CD8-positive, alpha-beta T cell (primary cell): ENCODE measurements at regions of chr10 and their contacts with region 1.

Region 1: GRCh38 chr10:16856567-16856966 is 39.3 kb upstream of the RSU1 start:
- DNase-seq: no peak
- ATAC-seq: no peak
- H3K4me3 ChIP-seq: no peak overlapping the region
- H3K4me3 Mint-ChIP-seq: no peak overlapping the region
- H3K27ac ChIP-seq: no peak overlapping the region
- H3K27ac Mint-ChIP-seq: no peak overlapping the region
- H3K4me1 ChIP-seq: no peaks in the 10 kb centered on the region
- H3K4me1 Mint-ChIP-seq: no peaks in the 10 kb centered on the region
- H3K27me3 ChIP-seq: no peaks in the 10 kb centered on the region
- H3K27me3 Mint-ChIP-seq: no peaks in the 10 kb centered on the region
- CTCF ChIP-seq: no peak

Region 2: DNA sequence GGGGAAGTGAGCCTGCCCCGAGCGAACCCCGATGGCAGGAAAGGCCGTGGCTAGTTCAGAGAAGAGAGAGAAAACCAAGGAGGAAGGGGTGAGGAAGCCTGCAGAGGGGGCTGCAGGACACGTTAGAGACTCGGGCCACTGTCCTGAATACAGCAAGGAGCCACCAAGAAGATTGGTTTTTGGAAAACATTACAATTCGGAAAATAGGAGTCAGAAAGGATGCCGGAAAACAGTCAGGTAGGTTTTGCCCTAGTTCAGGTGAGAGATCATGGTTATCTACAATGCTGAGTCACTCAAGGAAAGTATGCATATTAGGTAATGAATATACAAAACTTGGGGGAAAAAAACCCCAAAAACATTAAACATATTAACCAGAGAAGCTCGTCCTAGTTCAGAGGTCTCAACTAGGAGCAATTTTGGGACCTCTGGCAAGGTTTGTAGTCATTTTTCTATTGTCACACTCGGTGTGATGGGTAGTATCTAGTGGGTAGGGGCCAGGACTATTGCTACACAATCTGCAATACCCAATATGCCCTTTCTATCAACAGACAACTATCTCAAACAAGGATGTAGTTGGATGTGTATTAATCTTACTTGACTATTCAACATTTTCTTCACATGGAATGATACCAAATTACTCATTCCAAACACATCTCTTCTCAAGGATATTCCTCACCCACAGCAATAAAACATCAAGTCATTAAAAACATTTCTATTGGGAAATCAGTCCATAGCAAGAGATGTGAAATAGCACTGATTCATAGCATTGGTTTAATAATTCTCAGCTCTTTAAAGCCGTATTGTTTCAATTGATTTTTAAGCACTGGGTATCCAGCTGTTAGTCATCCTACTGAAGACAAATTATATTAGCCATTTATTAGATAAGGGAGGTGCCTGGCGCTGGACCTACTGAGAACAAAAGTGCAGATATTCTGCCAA is 35.1 kb after region 1 on chr10:
- CTCF ChIA-PET with region 1: no interaction called
- POLR2A ChIA-PET with region 1: no interaction called
- intact Hi-C with region 1: loop called in 1 of 2 experiments (anchors 5 kb)
- DNase-seq: peak in 7 of 9 experiments; percentile 9 to 63 (median 34)
- ATAC-seq: peak; percentile 67
- H3K4me3 ChIP-seq: no peak overlapping the region
- H3K4me3 Mint-ChIP-seq: peak overlapping the region; percentile 77
- H3K27ac ChIP-seq: no peak overlapping the region
- H3K27ac Mint-ChIP-seq: peak overlapping the region; percentile 58
- H3K4me1 ChIP-seq: no peaks in the 10 kb centered on the region
- H3K4me1 Mint-ChIP-seq: peaks cover 9% of the 10 kb centered on the region
- H3K27me3 ChIP-seq: no peaks in the 10 kb centered on the region
- H3K27me3 Mint-ChIP-seq: no peaks in the 10 kb centered on the region
- CTCF ChIP-seq: peak; percentile 21